Ascending aorta (tissue), 2 donors: ENCODE measurements at regions of chr21 and their contacts with region 1.

Region 1: GRCh38 chr21:33931799-33932390 is 16.3 kb upstream of the ATP5PO start:
- DNase-seq: no peak
- H3K4me3 ChIP-seq: peak overlapping the region; percentile 62 to 64
- H3K27ac ChIP-seq: peak overlapping the region; percentile 44 to 52
- H3K4me1 ChIP-seq: peaks cover 0 to 18% of the 10 kb centered on the region in 2 donors
- H3K27me3 ChIP-seq: no peaks in the 10 kb centered on the region
- CTCF ChIP-seq: no peak

Region 2: DNA sequence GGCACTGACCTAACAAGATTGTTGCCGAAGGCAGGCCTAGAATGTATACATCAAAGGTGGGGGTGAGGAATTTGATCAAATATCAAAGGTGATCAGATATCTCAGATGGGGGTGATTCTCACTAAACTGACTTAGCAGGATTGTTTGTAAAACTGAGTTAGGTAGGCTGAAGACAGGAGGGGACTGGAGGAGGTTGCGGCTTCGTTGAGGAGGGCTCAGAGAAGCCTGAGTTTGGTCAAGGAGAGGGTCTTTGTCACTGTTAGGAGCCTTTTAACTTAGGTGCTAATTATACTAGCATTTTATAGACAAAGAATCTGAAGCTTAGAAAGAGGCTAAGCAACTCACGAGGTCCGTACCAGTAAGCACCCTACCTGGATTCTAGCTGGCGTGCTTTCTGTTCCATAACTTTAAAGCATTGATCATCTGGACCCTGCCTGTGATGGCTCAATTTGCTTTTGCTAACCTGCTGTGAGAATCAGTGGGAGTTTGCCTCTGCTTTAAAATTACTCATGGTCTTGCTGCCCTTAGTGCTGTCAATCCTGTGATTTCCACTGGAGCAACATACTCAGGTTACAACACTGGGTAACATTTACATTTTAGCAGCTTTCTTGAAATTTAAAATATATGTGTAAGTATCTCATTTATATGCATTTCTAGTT is 239.8 kb before region 1 on chr21:
- intact Hi-C with region 1: no loop called
- DNase-seq: no peak
- H3K4me3 ChIP-seq: no peak overlapping the region
- H3K27ac ChIP-seq: no peak overlapping the region
- H3K4me1 ChIP-seq: peaks cover 2 to 16% of the 10 kb centered on the region in 2 donors
- H3K27me3 ChIP-seq: no peaks in the 10 kb centered on the region
- CTCF ChIP-seq: no peak

Region 3: GRCh38 chr21:34336756-34337391 is 405.0 kb after region 1 on chr21:
- intact Hi-C with region 1: loop called (anchors 10 kb)
- DNase-seq: no peak
- H3K4me3 ChIP-seq: no peak overlapping the region
- H3K27ac ChIP-seq: peak overlapping the region; percentile 78 to 80
- H3K4me1 ChIP-seq: peaks cover 14 to 52% of the 10 kb centered on the region in 2 donors
- H3K27me3 ChIP-seq: no peaks in the 10 kb centered on the region
- CTCF ChIP-seq: no peak